ENCODE measurements at regions of chr15 and their contacts with region 1.

Region 1: GRCh38 chr15:98442379-98442833 is 205.9 kb upstream of the IGF1R start:
- DNase-seq: peak; percentile 79
- H3K4me3 Mint-ChIP-seq: no peak overlapping the region
- H3K27ac Mint-ChIP-seq: no peak overlapping the region
- H3K4me1 Mint-ChIP-seq: peaks cover 20% of the 10 kb centered on the region
- H3K27me3 Mint-ChIP-seq: peaks cover 35% of the 10 kb centered on the region
- CTCF ChIP-seq: peak; percentile 76

Region 2: DNA sequence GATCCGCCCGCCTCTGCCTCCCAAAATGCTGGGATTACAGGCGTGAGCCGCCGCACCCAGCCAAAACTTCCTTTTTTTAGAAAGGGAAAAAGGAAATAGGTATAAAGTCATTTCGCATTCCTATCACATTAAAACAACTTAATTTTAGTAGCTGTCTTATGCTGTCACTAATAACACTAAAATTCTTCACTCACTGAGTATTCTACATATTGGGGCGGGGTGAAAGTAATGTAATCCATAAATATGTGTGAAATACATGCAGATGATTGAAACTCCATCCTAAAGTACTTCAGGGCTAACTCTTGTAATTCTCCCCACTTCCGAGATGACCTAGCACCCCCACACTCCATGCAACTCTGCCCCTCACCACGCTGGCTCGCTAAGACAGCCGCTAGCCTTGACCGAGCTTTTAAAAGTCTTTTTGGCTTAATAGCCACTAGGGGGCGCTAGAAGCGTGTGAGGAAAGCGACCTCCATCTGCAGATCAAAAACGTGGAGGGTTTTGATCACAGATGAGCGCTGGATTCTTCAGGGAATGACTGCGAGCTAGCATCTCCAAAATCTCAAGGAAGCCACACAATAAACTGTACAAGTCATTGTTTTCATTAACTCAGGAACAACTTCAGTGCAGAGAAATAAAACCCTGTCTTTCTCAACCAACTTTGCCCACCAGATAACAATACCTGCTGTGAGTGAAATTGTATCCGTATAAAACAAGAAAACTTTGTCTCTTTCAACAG is 76.6 kb after region 1 on chr15:
- CTCF ChIA-PET with region 1: no interaction called
- intact Hi-C with region 1: loop called (anchors 1 kb)
- DNase-seq: peak; percentile 58
- H3K4me3 Mint-ChIP-seq: no peak overlapping the region
- H3K27ac Mint-ChIP-seq: no peak overlapping the region
- H3K4me1 Mint-ChIP-seq: peaks cover 9% of the 10 kb centered on the region
- H3K27me3 Mint-ChIP-seq: peaks cover 5% of the 10 kb centered on the region
- CTCF ChIP-seq: peak; percentile 83

Region 3: DNA sequence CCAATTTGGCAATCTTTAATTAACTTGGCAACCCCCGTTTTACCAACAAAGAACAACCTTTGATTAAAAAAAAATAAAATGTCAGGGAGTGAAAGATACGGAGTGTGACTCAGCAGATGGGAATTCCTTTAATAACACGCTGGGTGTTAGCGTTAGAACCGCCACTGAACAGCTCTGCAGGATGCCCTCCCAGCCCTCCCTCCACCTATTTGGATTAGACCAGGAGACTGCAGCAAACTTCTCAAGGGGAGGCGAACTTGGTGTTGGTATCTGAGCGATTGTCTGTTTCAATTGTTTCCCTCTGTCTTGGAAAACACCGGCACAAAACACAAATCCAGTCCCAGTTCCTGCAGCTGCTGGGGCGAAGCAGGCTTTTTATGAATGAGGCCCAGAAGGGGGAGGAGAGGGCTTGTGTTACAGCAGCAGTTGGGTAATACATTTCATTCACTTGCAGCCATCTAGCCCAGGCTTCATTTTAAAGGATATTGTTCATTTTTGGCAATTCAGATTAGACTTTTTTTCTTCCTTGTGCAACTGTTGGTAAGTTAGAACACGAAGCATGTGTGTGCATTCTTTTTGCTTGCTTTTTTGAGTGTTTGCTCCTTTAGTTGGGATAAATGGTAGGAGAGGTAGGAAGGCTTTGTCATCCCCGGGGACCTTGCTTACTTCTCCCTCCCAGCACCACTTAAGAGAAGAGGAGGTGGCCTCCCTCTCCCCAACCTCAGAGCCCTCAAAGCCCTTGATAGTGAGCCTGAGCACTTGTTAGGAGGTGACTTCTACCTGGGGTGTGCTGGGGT is 358.2 kb after region 1 on chr15:
- CTCF ChIA-PET with region 1: no interaction called
- intact Hi-C with region 1: loop called (anchors 10 kb)
- DNase-seq: peak; percentile 55
- H3K4me3 Mint-ChIP-seq: peak overlapping the region; percentile 52
- H3K27ac Mint-ChIP-seq: peak overlapping the region; percentile 83
- H3K4me1 Mint-ChIP-seq: peaks cover 82% of the 10 kb centered on the region
- H3K27me3 Mint-ChIP-seq: no peaks in the 10 kb centered on the region
- CTCF ChIP-seq: no peak

Region 4: GRCh38 chr15:98904544-98904943 is 462.1 kb after region 1 on chr15:
- CTCF ChIA-PET with region 1: no interaction called
- intact Hi-C with region 1: loop called (anchors 5 kb)
- DNase-seq: peak; percentile 55
- H3K4me3 Mint-ChIP-seq: no peak overlapping the region
- H3K27ac Mint-ChIP-seq: no peak overlapping the region
- H3K4me1 Mint-ChIP-seq: peaks cover 11% of the 10 kb centered on the region
- H3K27me3 Mint-ChIP-seq: no peaks in the 10 kb centered on the region
- CTCF ChIP-seq: peak; percentile 40

Region 5: GRCh38 chr15:98983333-98983732 is 540.9 kb after region 1 on chr15:
- CTCF ChIA-PET with region 1: no interaction called
- intact Hi-C with region 1: no loop called
- DNase-seq: no peak
- H3K4me3 Mint-ChIP-seq: no peak overlapping the region
- H3K27ac Mint-ChIP-seq: no peak overlapping the region
- H3K4me1 Mint-ChIP-seq: no peaks in the 10 kb centered on the region
- H3K27me3 Mint-ChIP-seq: peaks cover under 1% of the 10 kb centered on the region
- CTCF ChIP-seq: no peak

Region 6: DNA sequence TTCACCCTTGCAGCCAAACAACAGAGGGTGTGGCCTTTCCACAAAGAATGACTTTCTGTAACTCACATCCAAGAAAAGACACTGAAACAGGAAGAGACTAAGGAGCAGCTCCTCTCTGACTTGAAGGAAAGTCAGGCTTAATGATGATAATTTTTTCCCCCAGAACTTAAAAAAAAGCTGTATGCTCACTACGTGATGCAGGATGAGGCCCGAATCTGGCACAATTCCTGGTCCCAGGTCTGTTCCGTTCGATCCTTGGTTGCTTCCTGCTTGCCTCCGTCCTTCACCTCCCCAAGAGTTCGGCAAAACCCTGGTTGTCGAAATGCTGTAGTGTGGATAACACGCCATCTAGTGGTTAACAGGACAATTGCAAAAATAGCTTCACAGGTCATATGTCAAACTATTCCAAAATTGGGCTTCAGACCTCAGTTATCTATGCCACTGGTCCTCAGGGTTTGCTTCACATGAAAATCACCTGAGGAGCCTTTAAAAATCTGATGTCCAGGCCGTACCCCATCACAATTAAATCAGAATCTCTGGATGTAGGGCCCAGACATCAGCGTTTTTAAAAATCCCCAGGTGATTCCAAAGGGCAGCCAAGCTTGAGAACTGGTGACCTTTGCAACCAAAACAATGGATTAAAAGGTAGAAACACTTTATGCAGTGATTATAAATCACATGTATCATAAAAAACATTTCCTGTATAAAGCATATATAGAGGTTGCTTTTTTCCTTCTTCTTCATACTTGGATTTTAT is 634.3 kb after region 1 on chr15:
- CTCF ChIA-PET with region 1: interaction called, 3 read pairs
- intact Hi-C with region 1: loop called (anchors 1 kb)
- DNase-seq: peak; percentile 61
- H3K4me3 Mint-ChIP-seq: peak overlapping the region; percentile 56
- H3K27ac Mint-ChIP-seq: peak overlapping the region; percentile 43
- H3K4me1 Mint-ChIP-seq: peaks cover 10% of the 10 kb centered on the region
- H3K27me3 Mint-ChIP-seq: peaks cover 57% of the 10 kb centered on the region
- CTCF ChIP-seq: peak; percentile 66